ENCODE measurements at regions of chr6 and their contacts with region 1.

Region 1: DNA sequence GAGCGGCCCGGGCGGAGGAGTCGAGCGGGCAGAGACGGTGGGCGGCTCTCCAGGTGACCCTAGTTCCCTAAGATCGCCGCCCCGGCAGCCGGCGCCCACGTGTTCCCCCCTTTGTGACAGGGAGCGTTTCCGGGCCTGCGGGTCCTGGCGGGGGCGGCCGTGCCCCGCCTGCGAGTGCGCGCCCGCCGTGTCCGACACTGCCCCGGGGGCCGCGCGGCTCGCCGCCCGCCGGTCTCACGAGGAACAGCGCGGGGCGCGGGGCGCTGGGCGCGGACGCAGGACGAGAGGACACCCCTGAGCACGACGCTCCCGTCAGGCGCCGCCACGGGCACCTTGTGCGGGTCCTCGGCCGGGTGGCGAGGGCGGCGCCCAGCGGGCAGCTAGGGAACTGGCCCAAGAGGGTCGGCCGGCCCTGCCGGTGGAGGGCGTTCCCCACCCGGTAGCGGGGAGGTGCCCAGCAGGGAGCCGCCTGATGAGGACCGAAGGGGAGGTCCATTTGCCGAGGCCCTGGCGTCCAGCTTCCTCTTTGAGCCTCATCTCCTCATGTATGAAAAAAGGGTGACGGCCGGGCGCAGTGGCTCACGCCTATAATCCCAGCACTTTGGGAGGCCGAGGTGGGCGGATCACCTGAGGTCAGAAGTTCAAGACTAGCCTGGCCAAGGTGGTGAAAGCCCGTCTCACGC is at the start of gene VARS1:
- DNase-seq: peak; percentile 83 to 90 (median 84)
- H3K4me3 ChIP-seq: peak within 1 kb of the TSS; percentile 72 to 96
- H3K4me3 Mint-ChIP-seq: peak within 1 kb of the TSS; percentile 94 to 99 (median 97)
- H3K27ac ChIP-seq: peak within 1 kb of the TSS; percentile 95
- H3K27ac Mint-ChIP-seq: peak within 1 kb of the TSS; percentile 63 to 99 (median 98)
- H3K4me1 ChIP-seq: peaks cover 55% of the 10 kb centered on the region
- H3K4me1 Mint-ChIP-seq: peaks cover 22 to 64% (median 37%) of the 10 kb centered on the region in 4 donors
- H3K27me3 ChIP-seq: no peaks in the 10 kb centered on the region
- H3K27me3 Mint-ChIP-seq: no peaks in the 10 kb centered on the region
- total RNA-seq, gene VARS1: 39.6 to 46.8 TPM

Region 2: GRCh38 chr6:31769684-31770371 is 25.9 kb before region 1 on chr6:
- CTCF ChIA-PET with region 1: interaction called, 11 read pairs
- POLR2A ChIA-PET with region 1: interaction called, 15 read pairs
- intact Hi-C with region 1: no loop called
- DNase-seq: peak; percentile 75 to 81 (median 80)
- H3K4me3 ChIP-seq: no peak overlapping the region
- H3K4me3 Mint-ChIP-seq: peak overlapping the region in 2 of 8 donors; percentile 42 to 57
- H3K27ac ChIP-seq: no peak overlapping the region
- H3K27ac Mint-ChIP-seq: peak overlapping the region in 5 of 7 donors; percentile 0 to 65 (median 36)
- H3K4me1 ChIP-seq: peaks cover 35% of the 10 kb centered on the region
- H3K4me1 Mint-ChIP-seq: peaks cover 15 to 34% (median 24%) of the 10 kb centered on the region in 4 donors
- H3K27me3 ChIP-seq: no peaks in the 10 kb centered on the region
- H3K27me3 Mint-ChIP-seq: no peaks in the 10 kb centered on the region

Region 3: DNA sequence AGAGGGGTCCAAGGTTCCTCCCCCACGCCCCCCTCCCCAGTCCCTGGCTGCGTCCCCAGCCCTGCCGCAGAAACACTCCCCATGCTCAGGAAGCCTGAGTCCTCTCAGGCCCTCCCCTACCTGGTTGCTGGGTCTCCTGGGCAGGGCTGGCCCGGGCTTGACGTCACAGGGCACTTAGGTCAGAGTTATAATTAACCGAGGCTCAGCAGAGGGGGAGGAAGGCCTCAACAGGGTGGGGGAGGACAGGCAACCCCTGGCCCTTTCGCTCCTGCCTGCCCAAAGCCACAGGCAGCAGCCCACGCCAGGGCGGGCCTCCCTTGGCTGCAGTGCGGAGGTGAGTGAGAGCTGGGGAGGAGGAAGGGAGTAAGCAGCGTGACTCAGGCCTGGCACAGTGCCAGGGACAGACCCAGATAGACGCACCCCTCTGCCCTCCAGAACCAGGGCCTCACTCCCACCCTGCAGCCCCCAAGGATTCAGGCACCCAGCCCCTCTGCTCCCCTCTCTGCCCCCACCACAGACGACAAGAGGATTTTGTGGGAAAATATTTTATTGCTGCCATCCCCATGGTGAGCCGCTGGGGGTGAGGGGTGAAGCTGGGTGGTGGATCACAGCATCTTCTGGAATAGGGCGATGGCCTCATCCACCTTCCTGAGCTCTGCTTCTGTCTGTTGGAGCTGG is 18.6 kb before region 1 on chr6 and contains the start of gene VWA7:
- CTCF ChIA-PET with region 1: interaction called, 4 read pairs
- POLR2A ChIA-PET with region 1: interaction called, 15 read pairs
- intact Hi-C with region 1: loop called (anchors 2 kb)
- DNase-seq: peak; percentile 49 to 88 (median 62)
- H3K4me3 ChIP-seq: peak within 1 kb of the TSS in 1 of 2 donors; percentile 30
- H3K4me3 Mint-ChIP-seq: peak within 1 kb of the TSS; percentile 27 to 75 (median 58)
- H3K27ac ChIP-seq: peak within 1 kb of the TSS; percentile 46
- H3K27ac Mint-ChIP-seq: peak within 1 kb of the TSS; percentile 57 to 87 (median 77)
- H3K4me1 ChIP-seq: peaks cover 44% of the 10 kb centered on the region
- H3K4me1 Mint-ChIP-seq: peaks cover 13 to 44% (median 31%) of the 10 kb centered on the region in 4 donors
- H3K27me3 ChIP-seq: no peaks in the 10 kb centered on the region
- H3K27me3 Mint-ChIP-seq: no peaks in the 10 kb centered on the region
- total RNA-seq, gene VWA7: 1.0 to 1.7 TPM

Region 4: DNA sequence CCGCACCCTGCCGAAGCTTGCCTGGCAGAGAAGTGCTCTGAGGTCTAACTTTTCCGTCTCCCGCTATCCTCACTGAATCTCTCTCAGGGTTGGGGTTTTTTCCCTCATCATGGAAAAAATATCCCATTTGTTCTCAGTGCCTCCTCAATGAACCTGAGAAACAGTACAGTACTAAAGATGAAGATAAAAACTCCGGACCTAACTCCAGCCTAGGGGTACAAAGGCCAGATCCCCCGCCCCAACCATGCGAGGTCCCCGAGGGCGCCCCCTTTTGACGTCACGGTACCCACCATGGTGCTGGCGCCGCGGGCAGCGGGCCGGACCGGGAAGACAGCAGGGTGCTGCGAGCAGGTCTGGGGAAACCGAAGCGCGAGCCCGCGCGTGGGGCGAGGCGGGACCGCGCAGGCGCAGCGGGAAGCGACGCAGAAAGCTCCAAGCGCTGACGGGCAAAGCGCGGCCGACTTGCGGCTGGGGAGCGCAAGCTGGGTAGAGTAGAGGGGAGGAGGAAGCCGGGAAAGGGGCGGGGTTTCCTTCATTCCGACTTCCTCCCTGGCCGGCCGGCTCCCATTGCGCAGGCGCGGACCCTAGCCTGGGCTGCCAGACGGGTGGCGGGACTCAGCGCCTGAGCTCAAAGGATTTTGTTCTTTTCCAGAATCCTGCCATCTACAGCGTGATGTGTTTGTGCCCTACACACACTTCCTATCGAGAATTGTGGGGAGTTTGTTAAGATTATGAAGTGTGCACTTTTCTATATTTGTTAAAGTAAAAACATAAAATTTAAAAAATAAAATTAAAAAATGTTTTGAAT is 10.9 kb after region 1 on chr6 and contains the start of gene LSM2:
- CTCF ChIA-PET with region 1: interaction called, 20 read pairs
- POLR2A ChIA-PET with region 1: interaction called, 93 read pairs
- intact Hi-C with region 1: loop called (anchors 1 kb)
- DNase-seq: peak; percentile 97 to 98 (median 97)
- H3K4me3 ChIP-seq: peak within 1 kb of the TSS; percentile 84 to 89
- H3K4me3 Mint-ChIP-seq: peak within 1 kb of the TSS; percentile 86 to 97 (median 90)
- H3K27ac ChIP-seq: peak within 1 kb of the TSS; percentile 80
- H3K27ac Mint-ChIP-seq: peak within 1 kb of the TSS; percentile 89 to 97 (median 93)
- H3K4me1 ChIP-seq: peaks cover 23% of the 10 kb centered on the region
- H3K4me1 Mint-ChIP-seq: peaks cover 11 to 37% (median 27%) of the 10 kb centered on the region in 4 donors
- H3K27me3 ChIP-seq: no peaks in the 10 kb centered on the region
- H3K27me3 Mint-ChIP-seq: no peaks in the 10 kb centered on the region
- total RNA-seq, gene LSM2: 30.0 to 34.6 TPM

Region 5: DNA sequence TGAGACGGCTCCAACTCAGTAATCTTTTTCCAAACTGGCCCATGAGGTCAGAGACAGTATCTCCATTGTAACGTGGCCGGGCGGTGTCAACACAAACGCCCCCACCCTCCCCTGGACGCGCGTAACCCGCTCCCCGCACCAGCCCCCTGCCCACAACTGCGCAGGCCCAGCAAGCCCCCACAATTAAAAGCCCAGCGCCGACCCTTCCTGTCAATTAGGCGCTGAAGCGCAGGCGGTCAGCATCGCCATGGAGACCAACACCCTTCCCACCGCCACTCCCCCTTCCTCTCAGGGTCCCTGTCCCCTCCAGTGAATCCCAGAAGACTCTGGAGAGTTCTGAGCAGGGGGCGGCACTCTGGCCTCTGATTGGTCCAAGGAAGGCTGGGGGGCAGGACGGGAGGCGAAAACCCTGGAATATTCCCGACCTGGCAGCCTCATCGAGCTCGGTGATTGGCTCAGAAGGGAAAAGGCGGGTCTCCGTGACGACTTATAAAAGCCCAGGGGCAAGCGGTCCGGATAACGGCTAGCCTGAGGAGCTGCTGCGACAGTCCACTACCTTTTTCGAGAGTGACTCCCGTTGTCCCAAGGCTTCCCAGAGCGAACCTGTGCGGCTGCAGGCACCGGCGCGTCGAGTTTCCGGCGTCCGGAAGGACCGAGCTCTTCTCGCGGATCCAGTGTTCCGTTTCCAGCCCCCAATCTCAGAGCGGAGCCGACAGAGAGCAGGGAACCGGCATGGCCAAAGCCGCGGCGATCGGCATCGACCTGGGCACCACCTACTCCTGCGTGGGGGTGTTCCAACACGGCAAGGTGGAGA is 19.5 kb after region 1 on chr6 and contains the starts of genes HSPA1A and HSPA1L:
- CTCF ChIA-PET with region 1: interaction called, 9 read pairs
- POLR2A ChIA-PET with region 1: interaction called, 73 read pairs
- intact Hi-C with region 1: loop called (anchors 2 kb)
- DNase-seq: peak; percentile 38 to 69 (median 42)
- H3K4me3 ChIP-seq: peak within 1 kb of the TSS; percentile 81 to 97
- H3K4me3 Mint-ChIP-seq: peak within 1 kb of the TSS; percentile 91 to 96 (median 94)
- H3K27ac ChIP-seq: peak within 1 kb of the TSS; percentile 82
- H3K27ac Mint-ChIP-seq: peak within 1 kb of the TSS; percentile 88 to 95 (median 92)
- H3K4me1 ChIP-seq: peaks cover 50% of the 10 kb centered on the region
- H3K4me1 Mint-ChIP-seq: peaks cover 31 to 66% (median 46%) of the 10 kb centered on the region in 4 donors
- H3K27me3 ChIP-seq: no peaks in the 10 kb centered on the region
- H3K27me3 Mint-ChIP-seq: no peaks in the 10 kb centered on the region
- total RNA-seq, gene HSPA1A: 69.9 to 71.5 TPM
- total RNA-seq, gene HSPA1L: 8.2 to 8.3 TPM

Region 6: DNA sequence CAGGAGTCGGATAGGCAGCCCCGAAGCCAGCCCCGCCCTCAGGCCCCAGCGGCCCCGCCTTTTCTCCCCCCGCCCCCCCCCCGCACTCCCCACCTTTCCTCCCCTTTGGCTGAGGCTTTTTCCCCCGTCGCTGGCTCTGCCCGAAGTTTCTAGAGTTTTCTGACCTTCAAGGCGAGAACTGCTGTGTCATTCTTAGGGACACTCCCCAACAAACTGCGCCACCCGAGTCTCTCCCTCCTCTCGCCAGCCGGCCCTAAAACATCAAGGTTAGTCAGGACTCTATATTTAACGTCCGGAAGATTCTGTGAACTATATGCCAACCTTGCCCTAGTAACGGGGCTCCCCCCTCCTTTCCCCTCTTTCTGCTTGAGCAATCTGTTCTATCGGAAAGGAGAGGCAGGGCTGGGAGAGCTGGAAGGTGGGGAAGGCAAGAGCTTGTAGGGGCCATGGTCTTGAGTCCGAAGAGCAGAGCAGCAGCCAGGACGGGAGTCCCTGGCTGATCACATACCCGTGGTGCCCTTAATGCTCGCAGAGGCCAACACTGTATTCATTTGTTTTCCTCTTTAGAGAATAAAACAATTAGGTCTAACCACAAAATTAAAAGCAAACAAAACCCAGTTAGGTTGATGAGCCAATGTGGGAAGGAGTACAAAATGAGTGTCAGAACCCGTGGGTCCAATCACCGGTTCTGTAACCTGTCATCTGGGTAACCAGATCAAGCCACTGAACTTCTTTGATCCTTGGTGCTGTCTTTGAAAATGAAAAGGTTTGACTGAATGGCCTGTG is 26.5 kb after region 1 on chr6:
- CTCF ChIA-PET with region 1: interaction called, 9 read pairs
- POLR2A ChIA-PET with region 1: interaction called, 29 read pairs
- intact Hi-C with region 1: loop called (anchors 1 kb)
- DNase-seq: peak; percentile 71 to 83 (median 73)
- H3K4me3 ChIP-seq: peak overlapping the region; percentile 84 to 96
- H3K4me3 Mint-ChIP-seq: peak overlapping the region; percentile 94 to 98 (median 97)
- H3K27ac ChIP-seq: peak overlapping the region; percentile 74
- H3K27ac Mint-ChIP-seq: peak overlapping the region; percentile 98 to 99 (median 98)
- H3K4me1 ChIP-seq: peaks cover 72% of the 10 kb centered on the region
- H3K4me1 Mint-ChIP-seq: peaks cover 31 to 81% (median 54%) of the 10 kb centered on the region in 4 donors
- H3K27me3 ChIP-seq: no peaks in the 10 kb centered on the region
- H3K27me3 Mint-ChIP-seq: no peaks in the 10 kb centered on the region

Region 7: DNA sequence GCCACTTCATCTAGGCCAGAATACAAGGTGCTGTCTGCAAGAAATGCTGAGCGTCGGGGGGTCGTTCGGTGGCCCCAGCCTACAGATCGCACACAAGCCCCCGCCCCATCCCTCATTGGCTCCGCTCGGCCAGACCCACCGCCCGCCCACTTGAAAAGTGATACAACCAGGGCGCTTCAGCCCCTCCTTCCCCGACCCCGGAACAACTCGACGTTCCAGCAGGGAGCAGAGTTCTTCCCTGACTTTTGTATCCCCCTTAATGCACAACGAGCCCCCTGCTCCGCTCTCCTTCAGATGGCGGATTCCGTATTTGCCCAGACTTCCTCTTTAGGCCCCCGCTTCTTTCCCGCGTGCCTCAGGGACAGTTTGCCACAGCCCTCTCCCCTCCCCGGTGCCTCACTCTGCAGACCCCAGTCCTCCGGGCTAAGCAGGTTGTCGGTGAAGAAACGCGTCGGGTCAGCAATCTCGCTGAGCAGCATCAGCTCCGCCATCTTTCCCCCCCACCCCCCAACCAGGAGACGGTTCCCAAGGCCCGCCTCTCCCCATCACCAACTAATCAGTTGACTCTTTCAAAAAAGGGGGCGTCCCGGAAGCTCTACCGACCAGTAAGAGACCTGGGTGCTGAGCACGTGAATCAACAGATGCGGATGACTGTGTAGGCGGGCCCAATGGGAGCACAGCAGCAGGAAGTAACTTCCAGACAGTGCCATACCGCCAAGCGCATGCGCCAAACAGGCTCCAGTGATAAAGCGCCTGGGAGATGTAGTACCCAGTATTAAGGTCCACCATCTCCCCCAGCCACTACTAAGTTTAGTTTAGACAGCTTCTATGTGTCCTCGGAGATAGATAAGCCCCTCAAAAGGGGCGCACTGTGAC is 332.2 kb after region 1 on chr6 and contains the start of gene ATF6B:
- CTCF ChIA-PET with region 1: no interaction called
- POLR2A ChIA-PET with region 1: no interaction called
- intact Hi-C with region 1: no loop called
- DNase-seq: peak; percentile 92 to 100 (median 98)
- H3K4me3 ChIP-seq: peak within 1 kb of the TSS; percentile 74 to 87
- H3K4me3 Mint-ChIP-seq: peak within 1 kb of the TSS; percentile 97 to 100 (median 99)
- H3K27ac ChIP-seq: peak within 1 kb of the TSS; percentile 83
- H3K27ac Mint-ChIP-seq: peak within 1 kb of the TSS; percentile 89 to 99 (median 99)
- H3K4me1 ChIP-seq: peaks cover 35% of the 10 kb centered on the region
- H3K4me1 Mint-ChIP-seq: peaks cover 33 to 57% (median 46%) of the 10 kb centered on the region in 4 donors
- H3K27me3 ChIP-seq: no peaks in the 10 kb centered on the region
- H3K27me3 Mint-ChIP-seq: peaks cover 0 to 2% of the 10 kb centered on the region in 2 donors
- total RNA-seq, gene ATF6B: 151 to 154 TPM

Measured in CD4-positive, alpha-beta memory T cell (primary cell).